A549 (cell line): ENCODE measurements at regions of chr16 and their contacts with region 1.

Region 1: GRCh38 chr16:23595951-23596720 is at the start of gene NDUFAB1:
- DNase-seq: peak; percentile 73 to 90
- ATAC-seq: peak; percentile 99
- H3K4me3 ChIP-seq: peak within 1 kb of the TSS; percentile 86
- H3K27ac ChIP-seq: peak within 1 kb of the TSS; percentile 92 to 99
- H3K4me1 ChIP-seq: peaks cover 11% of the 10 kb centered on the region; the same call in 2 of the 3 replicates
- CTCF ChIP-seq: peak; percentile 87
- EP300 ChIP-seq: no peak
- POLR2A ChIP-seq: peak; percentile 69
- RAD21 ChIP-seq: peak in 1 of 2 experiments; percentile 24; a peak in 1 of 5 replicates
- polyA plus RNA-seq, gene NDUFAB1: 160 and 277 TPM in 2 replicates

Region 2: GRCh38 chr16:23578101-23578830 is 17.9 kb before region 1 on chr16:
- CTCF ChIA-PET with region 1: interaction called, 14 read pairs
- POLR2A ChIA-PET with region 1: no interaction called
- DNase-seq: no peak
- ATAC-seq: no peak; a peak in 1 of 6 replicates
- H3K4me3 ChIP-seq: no peak overlapping the region
- H3K27ac ChIP-seq: no peak overlapping the region
- H3K4me1 ChIP-seq: no peaks in the 10 kb centered on the region
- CTCF ChIP-seq: no peak
- EP300 ChIP-seq: no peak
- POLR2A ChIP-seq: no peak
- RAD21 ChIP-seq: no peak

Region 3: DNA sequence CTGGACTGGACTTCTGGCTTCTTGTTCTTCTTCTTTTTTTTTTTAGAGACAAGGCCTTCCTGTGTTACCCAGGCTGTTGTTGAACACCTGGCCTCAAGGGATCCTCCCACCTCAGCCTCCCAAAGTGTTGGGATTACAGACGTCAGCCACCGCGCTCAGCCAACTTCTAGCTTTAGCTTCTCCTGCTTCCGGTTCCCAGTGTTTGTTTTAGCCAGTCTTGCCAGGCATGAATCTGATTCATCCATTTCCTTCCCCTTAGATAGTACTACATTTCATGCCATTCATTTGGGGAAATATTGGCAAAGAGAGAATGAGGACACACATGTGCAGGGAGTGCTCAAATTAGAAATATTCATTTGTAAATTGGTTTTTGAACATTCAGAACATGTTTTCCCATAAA is 12.1 kb after region 1 on chr16:
- CTCF ChIA-PET with region 1: interaction called, 10 read pairs
- POLR2A ChIA-PET with region 1: no interaction called
- DNase-seq: peak in 1 of 2 experiments; percentile 52
- ATAC-seq: peak; percentile 64 to 82; a peak in 5 of 6 replicates
- H3K4me3 ChIP-seq: no peak overlapping the region
- H3K27ac ChIP-seq: peak overlapping the region in 1 of 2 experiments; percentile 13; a peak in 2 of 6 replicates
- H3K4me1 ChIP-seq: peaks cover 12% of the 10 kb centered on the region; the same call in 1 of the 3 replicates
- CTCF ChIP-seq: no peak
- EP300 ChIP-seq: no peak
- POLR2A ChIP-seq: no peak
- RAD21 ChIP-seq: no peak